HEK293T (cell line): ENCODE measurements at regions of chr15 and their contacts with region 1.

Region 1: GRCh38 chr15:68277603-68278344 is at the start of gene FEM1B:
- DNase-seq: peak; percentile 78

Region 2: DNA sequence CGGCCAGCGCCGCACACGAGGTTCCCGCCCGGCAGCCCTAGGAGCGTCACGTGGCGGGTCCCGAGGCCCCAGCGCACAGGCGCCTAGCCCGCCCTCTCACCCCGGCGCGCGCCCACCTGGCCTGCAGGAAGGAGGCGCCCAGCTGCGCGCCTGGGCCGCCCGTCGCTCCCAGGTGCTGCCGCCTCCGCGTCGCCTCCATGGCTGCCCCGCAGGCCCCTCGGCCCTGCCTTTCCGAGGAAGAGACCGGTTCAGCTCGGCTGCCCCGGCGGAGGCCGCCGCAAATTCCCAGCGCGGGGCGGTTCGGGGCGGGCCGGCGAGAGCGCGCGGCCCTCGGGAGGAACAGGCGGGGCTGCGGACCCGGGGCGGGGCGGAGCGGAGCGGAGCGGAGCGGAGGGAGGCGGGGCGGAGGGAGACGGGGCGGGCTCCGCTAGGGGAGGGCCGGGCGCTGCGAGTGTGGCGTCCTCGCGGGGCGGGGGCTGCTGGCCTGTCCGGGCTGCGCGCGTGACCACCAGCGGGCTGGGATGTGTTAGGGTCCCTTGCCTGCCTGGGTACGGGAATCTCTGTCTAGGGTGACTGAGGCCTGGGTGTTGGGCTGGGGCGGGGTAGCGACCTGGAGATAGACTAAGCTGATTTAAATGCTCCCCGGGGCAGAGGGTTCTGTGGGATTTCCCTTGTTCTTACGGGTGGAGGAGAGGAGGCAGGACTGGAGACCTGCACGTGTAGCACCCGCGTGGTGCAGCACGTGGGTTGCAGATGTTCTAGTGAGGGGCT is 48.2 kb before region 1 on chr15 and contains the start of gene CLN6:
- CTCF ChIA-PET with region 1: no interaction called
- POLR2A ChIA-PET with region 1: interaction called, 14 read pairs
- DNase-seq: peak; percentile 96

Region 3: GRCh38 chr15:68252925-68253534 is 24.7 kb before region 1 on chr15:
- CTCF ChIA-PET with region 1: interaction called, 6 read pairs
- POLR2A ChIA-PET with region 1: interaction called, 12 read pairs
- DNase-seq: peak; percentile 62

Region 4: DNA sequence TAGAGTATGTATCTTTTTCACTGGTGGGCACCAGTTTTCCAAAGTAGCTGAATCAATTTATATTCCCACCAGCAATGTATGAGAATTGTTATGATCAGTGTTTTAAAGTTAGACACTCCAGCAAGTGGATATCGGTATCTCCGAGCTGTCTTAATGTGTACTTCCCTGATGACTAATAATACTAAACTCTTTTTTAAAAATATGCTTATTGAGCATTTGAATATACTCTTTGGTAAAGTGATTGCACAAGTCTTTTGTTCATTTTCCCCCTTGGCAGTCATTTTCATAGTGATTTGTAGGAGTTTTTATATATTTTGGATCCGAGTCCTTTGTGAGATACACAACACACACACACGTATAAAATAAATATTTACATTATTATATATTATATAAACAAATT is 12.7 kb before region 1 on chr15:
- CTCF ChIA-PET with region 1: interaction called, 4 read pairs
- POLR2A ChIA-PET with region 1: interaction called, 11 read pairs
- DNase-seq: no peak

Region 5: DNA sequence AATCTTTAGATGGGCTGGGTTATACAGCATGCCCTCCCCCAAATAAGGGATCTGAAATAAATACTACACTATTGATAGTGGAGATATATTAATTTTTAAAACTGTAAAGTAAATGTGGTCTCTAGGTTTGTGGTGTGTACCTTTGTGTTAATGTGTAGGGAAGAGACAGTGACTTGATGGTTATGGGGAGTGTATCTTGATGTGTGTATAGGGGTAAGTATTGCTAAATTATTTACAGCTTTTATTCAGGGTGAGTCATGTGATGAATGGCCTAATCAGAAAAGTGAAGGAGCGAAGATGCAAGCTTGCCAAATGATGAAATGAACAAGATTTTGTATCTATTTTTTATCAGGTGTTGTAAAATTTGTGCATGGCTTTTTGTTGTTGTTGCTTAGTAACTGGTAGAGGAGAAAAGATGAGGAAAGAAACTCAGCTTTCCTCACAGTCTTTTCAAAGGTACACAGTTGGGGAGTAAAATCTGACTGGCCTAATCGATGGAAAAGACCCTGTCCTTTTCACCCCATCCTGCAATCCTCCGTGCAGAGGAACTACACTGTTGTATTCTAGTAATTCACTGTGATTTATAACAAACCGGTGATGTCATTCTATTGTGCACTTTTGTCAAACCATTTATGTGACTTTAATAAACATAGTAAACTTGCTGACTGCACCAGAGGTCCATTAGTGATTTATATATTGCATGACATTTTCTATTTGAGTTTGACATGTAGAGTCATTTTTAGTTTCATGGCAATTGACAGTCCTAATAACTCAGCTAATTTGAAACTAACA is 17.4 kb after region 1 on chr15:
- CTCF ChIA-PET with region 1: interaction called, 4 read pairs
- POLR2A ChIA-PET with region 1: interaction called, 27 read pairs
- DNase-seq: no peak

Region 6: GRCh38 chr15:68304589-68305337 is 27.0 kb after region 1 on chr15:
- CTCF ChIA-PET with region 1: interaction called, 3 read pairs
- POLR2A ChIA-PET with region 1: interaction called, 11 read pairs
- DNase-seq: no peak